Mucosa of descending colon (tissue), 3 donors: ENCODE measurements at regions of chr11 and their contacts with region 1.

Region 1: DNA sequence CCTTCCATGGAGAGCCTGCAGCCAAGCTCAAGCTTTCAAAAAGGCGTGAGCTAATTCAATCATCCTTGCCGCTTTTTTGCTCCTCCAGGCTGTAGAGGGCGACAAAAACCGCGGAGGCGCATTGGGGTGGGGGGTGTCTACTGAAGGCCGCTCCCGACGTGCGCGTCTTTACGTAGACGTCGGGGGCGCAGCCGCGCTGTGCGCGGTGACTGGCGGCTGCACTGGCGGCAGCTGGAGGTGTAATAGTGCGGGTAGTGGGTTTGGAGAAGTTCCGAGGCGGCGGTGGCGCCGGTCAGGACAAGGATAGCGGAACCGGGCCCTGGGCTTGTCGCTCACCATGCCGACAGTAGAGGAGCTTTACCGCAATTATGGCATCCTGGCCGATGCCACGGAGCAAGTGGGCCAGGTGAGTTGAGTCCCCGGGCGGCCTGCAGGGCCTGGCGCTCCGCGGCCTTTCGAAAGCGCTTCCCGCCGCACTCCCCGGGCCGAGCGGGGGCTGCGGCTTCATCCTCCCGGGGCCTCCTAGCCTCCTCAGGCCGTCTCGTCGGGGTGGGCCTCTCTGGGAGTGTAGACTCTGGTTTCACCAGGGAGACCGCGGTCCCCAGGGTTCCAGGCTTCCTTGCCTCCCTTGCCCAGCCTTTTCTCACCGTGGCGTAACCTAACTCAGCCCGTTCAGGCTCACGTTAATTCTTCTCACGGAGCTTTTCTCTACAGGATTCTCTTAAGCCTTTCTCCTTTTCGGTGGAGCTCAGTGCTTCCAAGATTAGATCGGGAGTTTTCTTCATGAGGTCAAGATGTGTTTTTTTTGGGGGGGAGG is at the start of gene API5:
- DNase-seq: peak; percentile 94
- ATAC-seq: peak; percentile 100
- H3K4me3 ChIP-seq: peak within 1 kb of the TSS; percentile 91
- H3K4me1 ChIP-seq: peaks cover 18% of the 10 kb centered on the region
- CTCF ChIP-seq: peak; percentile 67
- total RNA-seq, gene API5: 70.9 to 88.5 (median 78.9) TPM

Region 2: DNA sequence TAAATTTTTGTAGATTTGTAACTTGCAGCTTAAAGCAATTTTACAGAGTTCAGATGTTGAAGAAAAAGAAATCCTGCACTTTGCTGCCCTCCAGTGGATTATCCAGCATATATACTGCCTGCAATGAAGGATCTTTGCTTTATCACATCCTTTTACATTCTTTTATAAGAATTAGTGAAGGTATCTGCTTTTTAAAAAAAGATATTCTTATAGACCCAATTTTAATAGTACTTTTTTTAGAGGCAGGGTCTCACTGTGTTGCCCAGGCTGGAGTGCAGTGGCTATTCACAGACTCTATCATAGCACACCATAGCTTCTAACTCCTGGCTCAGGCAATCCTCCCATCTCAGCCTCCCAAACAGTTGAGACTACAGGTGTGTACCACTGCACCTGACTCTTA is 107.5 kb after region 1 on chr11:
- intact Hi-C with region 1: loop called in 1 of 2 experiments (anchors 5 kb)
- DNase-seq: peak in 1 of 3 donors; percentile 78
- ATAC-seq: peak; percentile 69
- H3K4me3 ChIP-seq: no peak overlapping the region
- H3K4me1 ChIP-seq: no peaks in the 10 kb centered on the region
- CTCF ChIP-seq: peak; percentile 48

Region 3: DNA sequence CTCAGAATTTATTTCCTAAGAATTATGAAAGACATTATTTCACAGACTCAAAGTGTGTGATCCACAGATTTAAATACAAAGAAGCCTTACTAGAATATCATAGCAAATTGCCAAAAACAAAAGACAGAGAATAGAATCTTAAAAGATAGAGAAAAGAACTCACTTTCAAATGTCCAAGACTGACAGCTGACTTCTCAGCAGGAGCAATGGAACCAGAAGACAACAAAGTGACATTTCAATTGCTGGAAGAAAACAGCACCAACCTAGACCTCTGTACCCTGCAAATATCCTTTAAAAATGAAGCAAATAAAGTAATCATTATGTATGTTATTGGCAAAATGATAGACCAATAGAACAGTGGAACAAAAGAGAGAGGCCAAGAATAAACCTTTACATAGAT is 156.0 kb after region 1 on chr11:
- intact Hi-C with region 1: no loop called
- DNase-seq: no peak
- ATAC-seq: no peak
- H3K4me3 ChIP-seq: no peak overlapping the region
- H3K4me1 ChIP-seq: no peaks in the 10 kb centered on the region
- CTCF ChIP-seq: no peak